ENCODE measurements at regions of chr2 and their contacts with region 1.

Region 1: GRCh38 chr2:141911485-141912066 is 219.2 kb downstream of the LRP1B start:
- DNase-seq: peak; percentile 56
- H3K4me3 Mint-ChIP-seq: no peak overlapping the region
- H3K27ac Mint-ChIP-seq: no peak overlapping the region
- H3K4me1 Mint-ChIP-seq: no peaks in the 10 kb centered on the region
- H3K27me3 Mint-ChIP-seq: no peaks in the 10 kb centered on the region
- CTCF ChIP-seq: peak; percentile 24

Region 2: DNA sequence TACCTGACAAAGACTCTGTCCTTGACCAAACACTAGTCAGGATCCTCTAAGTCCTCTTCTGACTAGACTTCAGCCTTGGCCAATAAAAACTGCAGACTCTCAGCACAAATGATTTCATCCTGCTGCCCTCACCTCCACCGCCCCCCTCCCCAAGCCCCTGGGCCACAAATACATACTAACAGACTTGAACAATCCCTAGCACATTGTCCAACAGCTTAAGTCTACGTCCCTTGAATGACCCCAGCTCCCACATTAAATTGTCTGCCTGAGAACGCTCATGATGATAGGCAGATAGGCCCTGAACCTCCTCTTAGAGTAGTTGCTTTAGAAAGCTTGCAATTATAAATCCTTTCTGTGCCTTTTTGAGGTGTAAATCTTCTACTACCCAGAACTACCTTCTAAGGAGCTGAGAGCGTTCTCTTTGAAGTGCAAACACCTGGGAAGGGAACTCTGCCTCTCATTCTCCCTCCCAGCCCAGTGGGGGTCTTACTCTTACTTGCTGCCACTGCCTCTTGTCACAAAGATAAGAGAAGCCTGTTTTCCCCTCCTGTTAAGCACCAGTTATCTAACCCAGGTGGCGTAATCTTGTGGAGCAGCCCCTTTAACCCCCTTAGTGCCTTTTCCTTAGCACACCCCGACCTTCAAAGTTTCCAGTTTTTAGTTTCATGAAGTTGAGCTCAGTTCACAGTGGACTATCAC is 1006.3 kb before region 1 on chr2:
- CTCF ChIA-PET with region 1: no interaction called
- intact Hi-C with region 1: loop called (anchors 10 kb)
- DNase-seq: no peak
- H3K4me3 Mint-ChIP-seq: no peak overlapping the region
- H3K27ac Mint-ChIP-seq: no peak overlapping the region
- H3K4me1 Mint-ChIP-seq: no peaks in the 10 kb centered on the region
- H3K27me3 Mint-ChIP-seq: no peaks in the 10 kb centered on the region
- CTCF ChIP-seq: no peak

Region 3: GRCh38 chr2:141560723-141561122 is 350.9 kb before region 1 on chr2:
- CTCF ChIA-PET with region 1: interaction called, 7 read pairs
- intact Hi-C with region 1: loop called (anchors 1 kb)
- DNase-seq: no peak
- H3K4me3 Mint-ChIP-seq: peak overlapping the region; percentile 32
- H3K27ac Mint-ChIP-seq: peak overlapping the region; percentile 77
- H3K4me1 Mint-ChIP-seq: peaks cover 42% of the 10 kb centered on the region
- H3K27me3 Mint-ChIP-seq: no peaks in the 10 kb centered on the region
- CTCF ChIP-seq: no peak

Measured in Calu3 (cell line).